Colonic mucosa (tissue), 4 donors: ENCODE measurements at regions of chr9 and their contacts with region 1.

Region 1: DNA sequence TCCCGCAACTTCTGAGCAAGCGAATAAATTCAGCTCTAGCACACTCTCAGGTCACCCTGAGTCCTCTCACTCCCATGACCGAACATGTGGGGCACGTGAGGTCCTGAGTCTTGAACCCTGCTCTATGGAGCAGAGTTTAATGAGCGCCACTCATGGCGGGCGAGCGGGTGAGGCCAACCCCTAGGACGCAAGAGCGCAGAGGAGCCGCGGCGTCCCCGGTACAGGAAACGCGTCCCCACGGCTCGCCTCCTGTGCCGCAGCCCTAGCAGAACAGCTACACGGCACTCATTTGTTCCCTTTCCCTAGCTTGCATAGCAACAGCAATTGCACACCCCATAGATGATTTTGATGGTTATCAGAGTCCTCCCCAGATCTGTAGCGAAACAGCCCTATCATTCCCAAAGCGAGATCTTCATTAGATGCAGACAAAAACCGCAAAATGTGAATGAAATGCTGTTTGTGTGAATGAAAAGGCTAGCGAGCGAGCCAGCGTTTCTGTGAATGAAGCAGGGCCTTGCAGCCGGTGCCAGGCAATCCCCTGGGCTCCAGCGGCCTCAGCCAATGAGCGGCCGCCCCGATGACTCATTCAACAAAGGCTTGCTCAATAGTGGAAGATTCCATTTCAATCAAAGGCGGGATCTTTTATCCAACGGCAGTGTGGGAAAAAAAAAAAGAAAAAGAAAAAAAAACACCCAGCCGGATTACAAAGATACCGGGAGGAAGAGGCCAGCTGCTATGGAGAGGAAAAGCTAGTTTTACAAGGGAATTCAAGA is 1.5 kb upstream of the SHC3 start:
- DNase-seq: peak; percentile 91
- H3K4me3 ChIP-seq: peak overlapping the region; percentile 23
- H3K27ac ChIP-seq: peak overlapping the region; percentile 62
- H3K4me1 ChIP-seq: peaks cover 14% of the 10 kb centered on the region
- H3K27me3 ChIP-seq: peaks cover 30% of the 10 kb centered on the region
- CTCF ChIP-seq: no peak

Region 2: DNA sequence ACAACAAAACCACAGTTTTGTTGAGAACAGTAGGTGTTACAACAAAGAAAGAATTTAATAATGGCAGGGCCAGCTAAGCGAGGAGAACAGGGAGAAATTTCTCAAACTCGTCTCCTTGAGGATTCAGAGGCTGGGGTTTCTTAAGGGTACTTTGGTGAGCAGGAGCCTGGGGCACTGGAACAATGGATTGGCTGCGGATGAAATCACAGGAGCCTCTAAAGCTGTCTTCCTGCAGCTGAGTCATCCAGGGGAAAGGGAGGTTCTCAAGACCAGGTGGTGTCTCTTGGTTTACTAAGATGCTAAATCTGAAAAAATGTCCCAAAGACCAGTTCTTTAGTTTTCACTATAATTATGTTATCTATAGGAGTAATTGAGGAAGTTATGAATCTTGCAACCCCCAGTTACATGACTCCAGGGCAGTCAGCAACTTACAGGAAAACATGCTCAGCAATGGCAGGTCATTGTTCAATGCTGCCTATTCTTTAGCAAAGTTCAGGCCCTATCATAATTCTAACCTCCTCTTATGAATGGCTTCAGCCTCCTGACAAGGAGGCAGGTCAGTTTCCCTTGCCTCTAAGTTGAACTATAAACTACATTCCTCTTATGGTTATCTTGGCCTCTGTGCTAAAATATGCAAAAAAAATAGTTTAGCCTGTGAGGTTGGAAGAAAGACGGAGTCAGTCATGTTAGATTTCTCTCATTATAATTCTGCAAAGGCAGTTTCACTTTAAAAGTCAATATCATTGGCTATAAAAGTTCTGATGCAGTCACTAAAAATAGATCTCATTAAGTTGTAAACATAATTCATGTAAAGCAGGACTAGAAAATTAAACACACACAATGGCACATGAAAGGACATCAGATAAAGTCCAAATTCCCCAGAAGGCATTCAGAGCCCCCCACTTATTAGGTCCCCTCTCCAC is 67.6 kb after region 1 on chr9:
- intact Hi-C with region 1: loop called (anchors 10 kb)
- DNase-seq: no peak
- H3K4me3 ChIP-seq: no peak overlapping the region
- H3K27ac ChIP-seq: peak overlapping the region; percentile 80
- H3K4me1 ChIP-seq: no peaks in the 10 kb centered on the region
- H3K27me3 ChIP-seq: no peaks in the 10 kb centered on the region
- CTCF ChIP-seq: no peak

Region 3: DNA sequence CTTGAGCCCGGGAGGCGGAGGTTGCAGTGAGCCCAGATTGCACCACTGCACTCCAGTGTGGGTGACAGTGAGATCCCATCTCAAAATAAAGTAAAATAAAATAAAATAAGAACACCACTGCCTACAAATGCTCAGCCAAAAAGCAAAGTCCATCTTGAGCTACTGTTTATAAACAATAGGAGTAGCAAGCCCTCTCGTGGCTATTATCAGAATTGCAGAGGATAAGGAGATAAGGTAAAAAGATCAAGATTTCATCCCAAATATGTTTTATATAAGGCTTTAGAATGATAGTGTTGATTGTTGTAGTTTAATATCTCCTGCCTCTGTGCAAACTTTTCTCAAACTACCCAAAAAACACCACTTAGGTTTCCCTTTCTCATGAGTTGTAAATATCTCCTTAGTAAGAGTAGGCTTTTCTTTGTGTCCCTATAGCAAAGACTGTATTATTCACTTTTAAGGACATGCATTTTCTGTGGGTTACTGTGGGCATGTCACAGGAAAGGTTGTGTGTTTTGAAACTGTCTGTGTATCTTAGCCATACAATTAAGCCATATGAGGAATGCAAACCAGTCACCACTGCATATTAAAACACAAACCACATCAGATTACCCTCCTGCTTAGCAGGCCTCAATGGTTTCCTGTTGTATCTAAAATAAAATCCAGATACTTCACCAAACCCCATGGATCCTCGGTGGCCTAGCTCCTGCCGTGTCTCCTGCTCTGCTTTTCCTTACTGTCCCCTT is 99.1 kb after region 1 on chr9:
- intact Hi-C with region 1: loop called (anchors 5 kb)
- DNase-seq: peak; percentile 27
- H3K4me3 ChIP-seq: no peak overlapping the region
- H3K27ac ChIP-seq: no peak overlapping the region
- H3K4me1 ChIP-seq: no peaks in the 10 kb centered on the region
- H3K27me3 ChIP-seq: no peaks in the 10 kb centered on the region
- CTCF ChIP-seq: peak; percentile 79